GM12878 (cell line): ENCODE measurements at regions of chr5 and their contacts with region 1.

Region 1: DNA sequence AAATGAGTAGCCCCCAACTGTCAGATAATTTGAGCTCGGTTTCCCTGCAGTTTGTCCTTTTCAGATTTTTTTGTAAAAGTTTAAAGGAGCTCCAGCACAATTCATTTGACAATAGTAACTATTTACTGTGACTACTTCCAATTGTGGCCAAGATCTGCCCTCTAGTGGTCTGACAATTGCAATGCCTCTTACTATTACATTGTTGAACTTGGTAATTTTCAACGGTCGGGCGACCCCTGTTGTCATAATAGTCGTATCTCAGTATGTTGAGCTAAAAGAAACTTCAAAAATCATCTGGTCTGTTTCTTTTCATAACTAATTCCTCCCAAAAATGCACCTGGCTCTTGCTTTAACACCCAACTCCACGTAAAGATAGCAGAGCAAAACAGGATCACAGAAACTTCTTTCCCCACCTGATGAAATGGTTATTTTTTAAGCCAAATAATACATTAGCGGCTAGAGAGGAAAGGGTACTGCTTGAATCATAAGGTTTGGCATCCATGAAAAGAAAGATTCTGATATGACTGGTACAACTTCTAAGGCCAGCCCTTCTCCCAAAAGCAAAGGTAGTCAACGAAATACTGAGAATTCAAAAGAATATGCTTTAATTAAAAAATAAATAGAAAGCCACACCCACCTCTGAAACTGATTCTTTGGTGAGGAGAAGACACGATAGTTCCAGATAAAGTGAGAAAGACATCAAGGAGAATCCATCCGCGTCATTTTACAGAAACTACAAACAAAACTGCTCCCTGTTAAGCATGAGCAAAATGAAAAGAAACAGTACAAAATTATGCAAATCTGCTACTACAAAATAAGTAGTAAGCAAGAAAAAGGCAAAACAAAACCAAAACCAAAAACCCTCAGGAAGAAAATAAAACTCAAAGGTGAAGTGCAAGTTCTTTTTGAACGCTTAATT is 76.9 kb upstream of the HTR4 start:
- DNase-seq: peak; percentile 43
- ATAC-seq: peak; percentile 92
- H3K4me3 ChIP-seq: peak overlapping the region; percentile 47; the same call in 1 of the 2 replicates
- H3K27ac ChIP-seq: no peak overlapping the region
- H3K4me1 ChIP-seq: peaks cover 3% of the 10 kb centered on the region; the same call in 1 of the 2 replicates
- H3K27me3 ChIP-seq: no peaks in the 10 kb centered on the region; a peak in 1 of 4 replicates
- CTCF ChIP-seq: peak; percentile 83 to 99 (median 98); a peak in 5 of 6 replicates
- EP300 ChIP-seq: no peak
- POLR2A ChIP-seq: no peak
- RAD21 ChIP-seq: peak; percentile 83

Region 2: DNA sequence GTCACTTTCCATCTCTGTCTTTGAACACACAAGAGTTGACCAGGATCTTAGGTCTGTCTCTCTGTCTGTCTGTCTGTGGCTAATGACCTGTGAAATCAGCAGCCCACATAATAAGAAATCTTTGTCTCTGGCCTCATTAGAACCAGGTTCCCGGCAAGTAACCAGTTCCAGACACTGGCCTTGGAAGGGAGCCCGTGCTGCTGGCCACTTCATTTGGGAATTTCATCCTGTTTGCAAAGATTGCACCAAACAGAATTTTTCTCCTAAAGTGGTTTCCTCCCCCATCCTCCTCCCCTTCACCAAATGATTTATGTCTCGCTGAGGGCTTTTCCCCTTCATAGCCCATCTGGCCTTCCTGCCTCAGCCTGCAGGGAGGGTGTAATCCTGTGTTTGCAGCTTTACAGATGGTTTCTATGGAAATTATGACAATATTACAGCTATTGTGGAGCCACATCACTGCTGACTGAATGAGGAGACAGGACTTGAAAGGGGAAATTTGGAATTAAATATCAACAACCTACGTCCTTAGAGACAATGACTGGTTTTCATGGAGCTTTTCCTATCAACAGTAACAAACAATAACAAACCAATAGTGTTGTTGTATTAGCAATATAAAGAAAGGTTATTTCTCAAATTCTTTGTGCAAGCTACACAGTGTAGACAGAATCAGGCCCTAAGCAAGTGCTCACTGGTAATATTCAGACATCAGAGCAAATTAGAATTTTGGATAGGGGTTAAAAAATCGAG is 1247.1 kb before region 1 on chr5:
- CTCF ChIA-PET with region 1: no interaction called
- POLR2A ChIA-PET with region 1: no interaction called
- RAD21 ChIA-PET with region 1: no interaction called
- SMC1A ChIA-PET with region 1: no interaction called
- in situ Hi-C with region 1: no loop called
- intact Hi-C with region 1: no loop called
- DNase-seq: no peak
- ATAC-seq: peak; percentile 7; the same call in 1 of the 3 replicates
- H3K4me3 ChIP-seq: no peak overlapping the region
- H3K27ac ChIP-seq: no peak overlapping the region
- H3K4me1 ChIP-seq: peaks cover 4% of the 10 kb centered on the region; the same call in 1 of the 2 replicates
- H3K27me3 ChIP-seq: no peaks in the 10 kb centered on the region
- CTCF ChIP-seq: no peak
- EP300 ChIP-seq: no peak
- POLR2A ChIP-seq: no peak
- RAD21 ChIP-seq: no peak

Region 3: DNA sequence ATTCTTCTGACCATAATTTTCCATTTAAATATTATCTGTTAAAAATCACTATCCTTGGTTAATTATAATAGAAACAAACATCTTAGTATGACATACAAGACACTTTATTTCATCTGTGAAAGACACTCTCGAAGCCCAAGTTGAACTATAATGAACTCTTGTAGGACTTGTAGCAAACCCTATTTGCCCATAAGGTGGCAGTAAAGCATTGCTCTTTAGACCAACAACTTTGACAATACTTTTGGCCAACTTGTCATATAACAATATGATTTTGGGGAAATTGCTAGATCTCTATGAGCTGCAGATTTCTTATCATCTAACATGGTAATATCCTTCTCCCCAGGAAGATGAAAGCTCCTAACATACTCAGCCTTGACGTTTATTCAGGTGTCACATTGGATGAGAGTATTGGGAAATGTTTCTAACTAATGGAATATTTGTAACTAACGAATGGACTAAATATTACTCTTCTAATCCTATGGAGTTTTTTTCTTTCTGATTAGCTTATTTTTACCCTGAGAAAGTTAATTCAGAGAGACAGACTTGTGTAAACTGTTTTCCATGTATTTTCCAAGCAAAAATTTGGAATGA is 551.9 kb before region 1 on chr5:
- CTCF ChIA-PET with region 1: interaction called, 35 read pairs
- POLR2A ChIA-PET with region 1: no interaction called
- RAD21 ChIA-PET with region 1: interaction called, 8 read pairs
- SMC1A ChIA-PET with region 1: interaction called, 6 read pairs
- in situ Hi-C with region 1: loop called (anchors 5 kb)
- intact Hi-C with region 1: loop called (anchors 1 kb)
- DNase-seq: peak; percentile 4
- ATAC-seq: peak; percentile 77
- H3K4me3 ChIP-seq: no peak overlapping the region
- H3K27ac ChIP-seq: no peak overlapping the region
- H3K4me1 ChIP-seq: no peaks in the 10 kb centered on the region
- H3K27me3 ChIP-seq: no peaks in the 10 kb centered on the region
- CTCF ChIP-seq: peak; percentile 57 to 75 (median 61); a peak in 5 of 6 replicates
- EP300 ChIP-seq: no peak
- POLR2A ChIP-seq: no peak
- RAD21 ChIP-seq: peak; percentile 87

Region 4: DNA sequence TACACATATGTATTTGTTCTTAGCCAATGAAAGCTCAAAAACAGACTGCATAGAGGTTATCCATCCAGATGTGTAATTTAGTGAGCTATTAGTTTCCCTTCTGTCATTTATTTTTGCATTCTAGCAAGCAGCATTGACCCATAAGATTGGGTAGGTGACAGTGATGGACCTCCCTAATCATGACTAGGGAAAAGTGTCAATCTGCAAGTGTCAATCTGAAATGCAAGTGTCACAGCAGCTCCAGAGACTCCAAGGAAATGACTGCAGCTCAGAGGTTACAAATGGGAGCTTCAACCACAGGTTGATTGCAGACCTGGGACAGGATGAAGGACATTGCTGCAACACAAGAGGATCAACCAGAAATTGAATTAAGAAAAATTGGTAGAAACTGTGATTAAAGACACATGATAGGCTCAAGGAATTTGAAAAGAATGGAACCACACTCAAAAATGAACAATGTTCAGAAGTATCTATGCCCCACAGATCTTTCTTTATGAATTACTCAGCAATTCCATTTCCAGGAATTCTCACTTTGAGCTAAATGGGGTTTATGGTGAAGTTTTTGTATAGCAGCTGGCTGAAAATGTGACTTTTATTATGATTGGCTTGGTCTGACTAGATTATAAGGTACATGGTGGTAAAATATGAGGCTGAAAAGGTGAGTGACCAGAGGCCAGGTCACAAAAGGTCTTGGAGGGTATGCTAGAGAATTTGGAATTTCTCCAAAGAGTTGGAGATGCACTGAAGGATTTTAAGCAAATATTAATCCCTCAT is 17.3 kb before region 1 on chr5:
- CTCF ChIA-PET with region 1: interaction called, 48 read pairs
- POLR2A ChIA-PET with region 1: no interaction called
- RAD21 ChIA-PET with region 1: interaction called, 3 read pairs
- SMC1A ChIA-PET with region 1: interaction called, 4 read pairs
- in situ Hi-C with region 1: no loop called
- intact Hi-C with region 1: no loop called
- DNase-seq: no peak
- ATAC-seq: no peak
- H3K4me3 ChIP-seq: no peak overlapping the region
- H3K27ac ChIP-seq: no peak overlapping the region
- H3K4me1 ChIP-seq: no peaks in the 10 kb centered on the region
- H3K27me3 ChIP-seq: no peaks in the 10 kb centered on the region; a peak in 2 of 4 replicates
- CTCF ChIP-seq: no peak
- EP300 ChIP-seq: no peak
- POLR2A ChIP-seq: no peak
- RAD21 ChIP-seq: no peak

Region 5: DNA sequence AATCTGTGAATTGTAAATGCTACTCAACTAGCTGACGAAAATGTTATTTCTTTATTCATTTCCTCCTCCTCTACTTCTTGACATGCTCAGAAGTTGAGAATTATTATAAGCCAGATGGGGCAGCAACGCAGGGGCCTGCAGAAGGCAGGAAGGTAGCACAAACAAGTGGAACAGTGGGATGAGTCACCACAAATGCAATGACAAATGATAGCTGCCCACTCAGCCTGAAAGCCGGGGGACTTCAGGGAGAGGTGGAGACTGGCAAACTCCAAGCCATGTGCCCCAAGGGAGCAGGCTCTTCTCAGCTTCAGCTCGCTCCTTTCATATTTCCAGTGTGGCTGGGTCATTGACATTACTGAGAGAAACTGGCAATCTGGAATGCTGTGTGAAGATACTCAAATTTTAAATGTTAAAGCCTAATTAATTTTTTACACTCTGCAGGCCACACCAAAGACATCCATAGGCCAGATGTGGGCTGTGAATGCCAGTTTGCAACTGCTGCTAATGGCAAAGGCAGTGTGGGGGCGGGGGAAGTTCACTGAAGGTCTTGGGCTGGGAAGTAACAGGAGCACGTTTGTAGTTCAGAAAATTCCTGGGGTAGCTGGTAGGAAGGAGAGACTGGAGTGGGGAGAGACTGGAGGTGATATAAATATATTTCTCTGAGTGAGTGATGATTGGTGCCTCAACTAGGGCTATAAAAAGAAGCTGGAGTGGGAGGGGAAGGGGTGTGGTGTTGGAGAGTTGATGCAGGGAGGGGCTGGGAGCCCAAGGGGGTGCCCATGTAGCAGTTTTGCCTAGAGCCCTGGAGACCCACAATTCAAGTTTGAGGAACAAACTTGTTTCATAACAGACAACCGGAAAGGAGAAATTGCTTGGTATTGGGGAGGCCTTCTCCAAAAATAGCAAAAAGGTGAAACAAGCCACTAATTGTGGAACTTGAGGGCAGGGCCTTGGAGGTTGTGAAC is 74.4 kb after region 1 on chr5:
- CTCF ChIA-PET with region 1: interaction called, 13 read pairs
- POLR2A ChIA-PET with region 1: no interaction called
- RAD21 ChIA-PET with region 1: interaction called, 4 read pairs
- SMC1A ChIA-PET with region 1: interaction called, 3 read pairs
- in situ Hi-C with region 1: no loop called
- intact Hi-C with region 1: no loop called
- DNase-seq: peak; percentile 79
- ATAC-seq: peak; percentile 64
- H3K4me3 ChIP-seq: peak overlapping the region; percentile 12; the same call in 1 of the 2 replicates
- H3K27ac ChIP-seq: peak overlapping the region; percentile 79
- H3K4me1 ChIP-seq: peaks cover 58% of the 10 kb centered on the region
- H3K27me3 ChIP-seq: no peaks in the 10 kb centered on the region
- CTCF ChIP-seq: no peak
- EP300 ChIP-seq: peak in 1 of 2 experiments; percentile 60; a peak in 1 of 4 replicates
- POLR2A ChIP-seq: no peak
- RAD21 ChIP-seq: no peak

Region 6: DNA sequence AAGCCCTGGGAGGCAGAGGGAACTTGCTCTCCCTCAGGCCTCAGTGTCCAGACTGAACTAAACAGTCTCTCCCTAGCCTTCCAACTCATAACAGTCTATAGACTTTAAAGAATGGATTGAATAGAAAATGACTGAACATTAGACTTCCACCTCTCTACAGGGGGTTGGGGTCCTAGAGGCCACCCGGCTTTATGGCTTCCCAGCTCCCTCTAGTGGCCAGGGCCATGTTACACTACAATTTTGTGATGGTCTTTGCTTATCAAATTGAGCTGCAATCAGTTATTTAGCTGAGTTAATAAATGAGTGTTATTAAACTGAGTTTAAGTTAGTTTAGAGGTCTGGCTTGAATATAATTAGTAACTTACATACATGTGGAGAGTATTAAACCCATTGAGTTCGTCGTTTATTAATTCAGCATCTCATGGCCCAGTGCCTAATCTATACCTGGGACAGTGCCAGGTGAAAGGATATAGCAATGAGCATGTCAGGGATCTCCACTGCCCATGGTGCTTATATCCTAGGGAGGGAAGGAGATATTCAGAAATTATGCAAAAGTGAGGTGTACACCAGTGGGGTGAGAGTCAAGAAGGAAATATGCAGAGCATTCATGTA is 226.5 kb after region 1 on chr5:
- CTCF ChIA-PET with region 1: interaction called, 523 read pairs
- POLR2A ChIA-PET with region 1: no interaction called
- RAD21 ChIA-PET with region 1: interaction called, 74 read pairs
- SMC1A ChIA-PET with region 1: interaction called, 80 read pairs
- in situ Hi-C with region 1: loop called (anchors 5 kb)
- intact Hi-C with region 1: loop called (anchors 1 kb)
- DNase-seq: no peak
- ATAC-seq: peak; percentile 82
- H3K4me3 ChIP-seq: no peak overlapping the region
- H3K27ac ChIP-seq: no peak overlapping the region
- H3K4me1 ChIP-seq: no peaks in the 10 kb centered on the region
- H3K27me3 ChIP-seq: no peaks in the 10 kb centered on the region
- CTCF ChIP-seq: peak; percentile 75 to 87 (median 77)
- EP300 ChIP-seq: no peak
- POLR2A ChIP-seq: no peak
- RAD21 ChIP-seq: peak; percentile 83

Region 7: DNA sequence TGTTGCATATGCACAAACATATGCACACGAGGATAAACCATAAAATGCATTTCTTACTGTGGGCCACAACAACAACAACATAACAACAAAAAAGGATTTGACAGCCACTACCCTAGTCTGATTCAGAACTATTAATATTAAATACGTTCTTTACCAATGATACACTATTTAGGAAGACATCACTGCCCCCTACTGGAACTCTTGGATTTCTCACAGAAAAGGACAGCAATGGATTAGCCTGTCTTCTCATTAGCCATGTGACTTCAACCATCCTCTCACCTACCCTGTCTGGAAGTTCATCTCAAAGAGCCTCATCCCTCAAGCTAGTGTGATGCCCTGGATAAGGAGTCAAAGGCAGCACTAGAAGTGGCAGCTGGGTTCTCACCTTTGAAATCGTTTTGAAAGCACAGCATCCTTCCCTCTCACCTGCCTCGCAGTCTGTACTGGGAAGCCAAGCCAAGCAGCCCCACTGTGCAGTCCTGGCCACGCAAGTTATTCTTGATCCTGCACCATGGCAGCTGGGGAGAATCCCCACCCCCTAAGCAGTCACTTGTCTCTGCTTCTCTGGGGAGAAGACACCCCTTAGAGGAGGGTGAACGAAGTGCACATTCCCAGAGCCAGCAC is 267.1 kb after region 1 on chr5:
- CTCF ChIA-PET with region 1: interaction called, 105 read pairs
- POLR2A ChIA-PET with region 1: no interaction called
- RAD21 ChIA-PET with region 1: interaction called, 4 read pairs
- SMC1A ChIA-PET with region 1: interaction called, 55 read pairs
- in situ Hi-C with region 1: no loop called
- intact Hi-C with region 1: loop called (anchors 1 kb)
- DNase-seq: no peak
- ATAC-seq: peak; percentile 86
- H3K4me3 ChIP-seq: no peak overlapping the region
- H3K27ac ChIP-seq: no peak overlapping the region
- H3K4me1 ChIP-seq: no peaks in the 10 kb centered on the region
- H3K27me3 ChIP-seq: no peaks in the 10 kb centered on the region
- CTCF ChIP-seq: peak; percentile 49 to 56 (median 52); a peak in 5 of 6 replicates
- EP300 ChIP-seq: no peak
- POLR2A ChIP-seq: no peak
- RAD21 ChIP-seq: peak; percentile 56

Region 8: GRCh38 chr5:149114403-149115312 is 383.5 kb after region 1 on chr5:
- CTCF ChIA-PET with region 1: interaction called, 27 read pairs
- POLR2A ChIA-PET with region 1: no interaction called
- RAD21 ChIA-PET with region 1: interaction called, 11 read pairs
- SMC1A ChIA-PET with region 1: interaction called, 22 read pairs
- in situ Hi-C with region 1: loop called (anchors 10 kb)
- intact Hi-C with region 1: loop called (anchors 1 kb)
- DNase-seq: no peak
- ATAC-seq: peak; percentile 97
- H3K4me3 ChIP-seq: no peak overlapping the region
- H3K27ac ChIP-seq: no peak overlapping the region
- H3K4me1 ChIP-seq: no peaks in the 10 kb centered on the region
- H3K27me3 ChIP-seq: no peaks in the 10 kb centered on the region
- CTCF ChIP-seq: peak; percentile 66 to 74 (median 73)
- EP300 ChIP-seq: no peak
- POLR2A ChIP-seq: no peak
- RAD21 ChIP-seq: peak; percentile 69